Natural killer cell (primary cell): ENCODE measurements at regions of chr11 and their contacts with region 1.

Region 1: DNA sequence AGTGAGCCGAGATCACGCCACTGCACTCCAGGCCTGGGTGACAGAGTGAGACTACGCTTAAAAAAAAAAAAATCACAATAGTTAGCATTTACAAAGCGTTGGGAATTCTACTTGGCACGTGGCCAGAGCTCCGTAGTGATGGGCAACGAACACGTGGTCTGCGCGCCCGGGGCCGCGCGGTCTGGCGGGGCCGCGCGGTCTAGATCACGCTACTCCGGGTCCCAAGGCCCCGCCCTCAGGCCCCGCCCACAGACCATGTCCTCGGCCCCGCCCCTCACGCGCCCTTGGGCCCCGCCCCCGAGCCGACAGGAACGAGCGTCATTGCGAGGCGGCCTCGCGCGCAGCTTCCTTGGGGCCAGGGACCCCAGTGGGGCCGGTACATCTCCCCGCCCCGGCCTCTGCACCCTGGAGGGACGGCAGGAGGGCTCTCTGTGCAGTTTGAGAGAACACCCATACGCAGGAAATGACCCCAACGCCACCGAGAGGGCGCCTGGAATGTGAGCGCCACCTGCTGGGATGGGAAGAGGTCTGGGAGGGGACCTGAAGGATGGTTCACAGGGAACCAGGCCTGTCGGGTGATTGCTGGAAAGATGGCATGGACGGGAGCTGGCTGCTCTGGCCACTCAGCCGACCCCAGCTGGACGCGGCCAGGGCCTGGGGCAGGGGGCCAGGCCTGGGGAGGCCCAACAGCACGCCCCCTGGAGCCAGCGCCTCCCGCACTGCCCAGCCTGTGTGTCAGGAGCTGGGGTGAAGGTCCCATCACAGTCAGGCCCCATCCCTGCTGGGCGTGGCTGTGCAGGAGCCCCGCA is 2.0 kb upstream of the PTDSS2 start:
- DNase-seq: peak; percentile 95 to 96
- ATAC-seq: peak; percentile 75 to 88 (median 77)
- H3K4me3 ChIP-seq: peak overlapping the region; percentile 53
- H3K4me3 Mint-ChIP-seq: peak overlapping the region; percentile 88
- H3K27ac ChIP-seq: peak overlapping the region; percentile 88
- H3K27ac Mint-ChIP-seq: peak overlapping the region; percentile 91 to 95
- H3K4me1 ChIP-seq: peaks cover 35% of the 10 kb centered on the region
- H3K4me1 Mint-ChIP-seq: peaks cover 10 to 21% of the 10 kb centered on the region in 2 donors
- H3K27me3 ChIP-seq: no peaks in the 10 kb centered on the region
- H3K27me3 Mint-ChIP-seq: no peaks in the 10 kb centered on the region
- CTCF ChIP-seq: peak; percentile 77

Region 2: GRCh38 chr11:207208-207862 is 240.8 kb before region 1 on chr11 and contains the starts of genes BET1L and RIC8A:
- intact Hi-C with region 1: loop called (anchors 1 kb)
- DNase-seq: peak; percentile 96 to 99
- ATAC-seq: peak; percentile 79 to 95 (median 83)
- H3K4me3 ChIP-seq: peak within 1 kb of the TSS; percentile 76
- H3K4me3 Mint-ChIP-seq: peak within 1 kb of the TSS; percentile 97
- H3K27ac ChIP-seq: peak within 1 kb of the TSS; percentile 94
- H3K27ac Mint-ChIP-seq: peak within 1 kb of the TSS; percentile 99
- H3K4me1 ChIP-seq: peaks cover 50% of the 10 kb centered on the region
- H3K4me1 Mint-ChIP-seq: peaks cover 40 to 55% of the 10 kb centered on the region in 2 donors
- H3K27me3 ChIP-seq: no peaks in the 10 kb centered on the region
- H3K27me3 Mint-ChIP-seq: no peaks in the 10 kb centered on the region
- CTCF ChIP-seq: no peak
- total RNA-seq, gene BET1L: 32.4 to 44.1 (median 35.8) TPM
- total RNA-seq, gene RIC8A: 102 to 153 (median 106) TPM

Region 3: DNA sequence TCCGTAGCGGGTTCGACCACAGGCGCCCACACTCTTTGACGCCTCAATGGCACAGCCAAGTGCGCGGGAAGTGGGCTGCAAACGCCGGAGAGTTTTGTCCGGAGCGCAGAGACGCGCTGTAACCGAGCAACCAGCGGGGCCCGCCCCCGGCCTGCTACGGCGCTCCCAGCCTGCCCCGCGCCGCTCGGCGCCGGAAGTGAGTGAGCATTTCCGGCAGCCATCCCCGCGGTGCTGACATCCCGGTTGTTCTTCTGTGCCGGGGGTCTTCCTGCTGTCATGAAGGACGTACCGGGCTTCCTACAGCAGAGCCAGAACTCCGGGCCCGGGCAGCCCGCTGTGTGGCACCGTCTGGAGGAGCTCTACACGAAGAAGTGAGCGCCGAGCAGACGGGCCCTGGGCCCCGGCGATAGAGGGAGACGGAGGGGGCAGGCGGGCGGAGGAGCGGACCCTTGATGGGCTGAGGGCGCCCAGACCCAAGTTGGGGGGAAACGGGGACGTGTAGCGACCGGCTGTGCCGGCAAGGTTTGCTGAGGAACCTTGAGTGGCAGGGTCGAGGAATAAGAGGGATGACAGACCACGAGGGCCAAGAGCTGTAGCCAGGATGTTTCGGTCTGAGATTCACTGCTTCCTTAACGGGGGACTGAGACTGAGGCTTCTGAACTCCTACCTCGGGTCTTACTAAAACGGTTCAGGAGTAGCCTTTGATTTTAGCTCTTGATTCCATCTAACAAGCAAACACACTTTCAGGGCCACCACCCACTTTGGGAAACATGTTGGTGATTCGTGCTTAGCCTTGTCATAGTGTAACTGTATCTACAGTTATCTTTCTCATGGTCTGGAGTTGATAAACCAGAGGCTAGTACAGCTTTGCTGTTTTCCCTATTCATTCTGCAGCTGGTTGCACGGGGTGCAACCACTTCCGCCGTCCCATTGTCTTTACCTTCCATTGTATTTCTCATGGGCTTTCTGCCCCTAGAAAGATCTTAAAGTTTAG is 211.1 kb before region 1 on chr11 and contains the start of gene PSMD13:
- intact Hi-C with region 1: loop called (anchors 1 kb)
- DNase-seq: peak; percentile 87 to 94
- ATAC-seq: peak; percentile 76 to 90 (median 79)
- H3K4me3 ChIP-seq: peak within 1 kb of the TSS; percentile 99
- H3K4me3 Mint-ChIP-seq: peak within 1 kb of the TSS; percentile 97
- H3K27ac ChIP-seq: peak within 1 kb of the TSS; percentile 100
- H3K27ac Mint-ChIP-seq: peak within 1 kb of the TSS; percentile 98
- H3K4me1 ChIP-seq: peaks cover 20% of the 10 kb centered on the region
- H3K4me1 Mint-ChIP-seq: peaks cover 38 to 42% of the 10 kb centered on the region in 2 donors
- H3K27me3 ChIP-seq: no peaks in the 10 kb centered on the region
- H3K27me3 Mint-ChIP-seq: no peaks in the 10 kb centered on the region
- CTCF ChIP-seq: no peak
- total RNA-seq, gene PSMD13: 94.6 to 111 (median 104) TPM

Region 4: GRCh38 chr11:250740-251299 is 197.3 kb before region 1 on chr11:
- intact Hi-C with region 1: loop called (anchors 5 kb)
- DNase-seq: peak; percentile 73 to 90
- ATAC-seq: peak; percentile 93 to 100 (median 97)
- H3K4me3 ChIP-seq: no peak overlapping the region
- H3K4me3 Mint-ChIP-seq: no peak overlapping the region
- H3K27ac ChIP-seq: no peak overlapping the region
- H3K27ac Mint-ChIP-seq: peak overlapping the region in 1 of 2 donors; percentile 40
- H3K4me1 ChIP-seq: peaks cover 5% of the 10 kb centered on the region
- H3K4me1 Mint-ChIP-seq: peaks cover 0 to 13% of the 10 kb centered on the region in 2 donors
- H3K27me3 ChIP-seq: no peaks in the 10 kb centered on the region
- H3K27me3 Mint-ChIP-seq: no peaks in the 10 kb centered on the region
- CTCF ChIP-seq: peak; percentile 67

Region 5: GRCh38 chr11:335779-336658 is 112.1 kb before region 1 on chr11:
- intact Hi-C with region 1: no loop called
- DNase-seq: no peak
- ATAC-seq: no peak
- H3K4me3 ChIP-seq: no peak overlapping the region
- H3K4me3 Mint-ChIP-seq: no peak overlapping the region
- H3K27ac ChIP-seq: no peak overlapping the region
- H3K27ac Mint-ChIP-seq: peak overlapping the region; percentile 71 to 77
- H3K4me1 ChIP-seq: peaks cover 49% of the 10 kb centered on the region
- H3K4me1 Mint-ChIP-seq: peaks cover 57 to 61% of the 10 kb centered on the region in 2 donors
- H3K27me3 ChIP-seq: no peaks in the 10 kb centered on the region
- H3K27me3 Mint-ChIP-seq: no peaks in the 10 kb centered on the region
- CTCF ChIP-seq: no peak

Region 6: GRCh38 chr11:406978-407739 is 41.0 kb before region 1 on chr11:
- intact Hi-C with region 1: loop called (anchors 2 kb)
- DNase-seq: peak; percentile 97 to 98
- ATAC-seq: peak; percentile 92 to 96 (median 93)
- H3K4me3 ChIP-seq: no peak overlapping the region
- H3K4me3 Mint-ChIP-seq: peak overlapping the region; percentile 50
- H3K27ac ChIP-seq: peak overlapping the region; percentile 87
- H3K27ac Mint-ChIP-seq: peak overlapping the region; percentile 73 to 82
- H3K4me1 ChIP-seq: peaks cover 47% of the 10 kb centered on the region
- H3K4me1 Mint-ChIP-seq: peaks cover 0 to 18% of the 10 kb centered on the region in 2 donors
- H3K27me3 ChIP-seq: no peaks in the 10 kb centered on the region
- H3K27me3 Mint-ChIP-seq: no peaks in the 10 kb centered on the region
- CTCF ChIP-seq: no peak

Region 7: GRCh38 chr11:416757-417621 is 31.1 kb before region 1 on chr11:
- intact Hi-C with region 1: loop called (anchors 2 kb)
- DNase-seq: peak; percentile 57 to 65
- ATAC-seq: peak; percentile 47 to 66 (median 56)
- H3K4me3 ChIP-seq: peak overlapping the region; percentile 70
- H3K4me3 Mint-ChIP-seq: peak overlapping the region; percentile 96
- H3K27ac ChIP-seq: peak overlapping the region; percentile 81
- H3K27ac Mint-ChIP-seq: peak overlapping the region in 1 of 2 donors; percentile 84
- H3K4me1 ChIP-seq: peaks cover 44% of the 10 kb centered on the region
- H3K4me1 Mint-ChIP-seq: peaks cover 17 to 49% of the 10 kb centered on the region in 2 donors
- H3K27me3 ChIP-seq: no peaks in the 10 kb centered on the region
- H3K27me3 Mint-ChIP-seq: no peaks in the 10 kb centered on the region
- CTCF ChIP-seq: no peak

Region 8: GRCh38 chr11:506238-506994 is 58.3 kb after region 1 on chr11:
- intact Hi-C with region 1: loop called (anchors 2 kb)
- DNase-seq: peak; percentile 97 to 99
- ATAC-seq: peak; percentile 71 to 87 (median 75)
- H3K4me3 ChIP-seq: peak overlapping the region; percentile 98
- H3K4me3 Mint-ChIP-seq: peak overlapping the region; percentile 97
- H3K27ac ChIP-seq: peak overlapping the region; percentile 100
- H3K27ac Mint-ChIP-seq: peak overlapping the region; percentile 97 to 99
- H3K4me1 ChIP-seq: peaks cover 52% of the 10 kb centered on the region
- H3K4me1 Mint-ChIP-seq: peaks cover 8 to 18% of the 10 kb centered on the region in 2 donors
- H3K27me3 ChIP-seq: no peaks in the 10 kb centered on the region
- H3K27me3 Mint-ChIP-seq: no peaks in the 10 kb centered on the region
- CTCF ChIP-seq: no peak

Region 9: GRCh38 chr11:636452-637235 is 188.5 kb after region 1 on chr11:
- intact Hi-C with region 1: no loop called
- DNase-seq: peak in 1 of 2 donors; percentile 6
- ATAC-seq: peak in 1 of 3 donors; percentile 16
- H3K4me3 ChIP-seq: no peak overlapping the region
- H3K4me3 Mint-ChIP-seq: no peak overlapping the region
- H3K27ac ChIP-seq: no peak overlapping the region
- H3K27ac Mint-ChIP-seq: no peak overlapping the region
- H3K4me1 ChIP-seq: peaks cover 18% of the 10 kb centered on the region
- H3K4me1 Mint-ChIP-seq: peaks cover 5 to 14% of the 10 kb centered on the region in 2 donors
- H3K27me3 ChIP-seq: peaks cover 16% of the 10 kb centered on the region
- H3K27me3 Mint-ChIP-seq: peaks cover 8 to 24% of the 10 kb centered on the region in 2 donors
- CTCF ChIP-seq: no peak